ENCODE measurements at regions of chr11 and their contacts with region 1.

Region 1: DNA sequence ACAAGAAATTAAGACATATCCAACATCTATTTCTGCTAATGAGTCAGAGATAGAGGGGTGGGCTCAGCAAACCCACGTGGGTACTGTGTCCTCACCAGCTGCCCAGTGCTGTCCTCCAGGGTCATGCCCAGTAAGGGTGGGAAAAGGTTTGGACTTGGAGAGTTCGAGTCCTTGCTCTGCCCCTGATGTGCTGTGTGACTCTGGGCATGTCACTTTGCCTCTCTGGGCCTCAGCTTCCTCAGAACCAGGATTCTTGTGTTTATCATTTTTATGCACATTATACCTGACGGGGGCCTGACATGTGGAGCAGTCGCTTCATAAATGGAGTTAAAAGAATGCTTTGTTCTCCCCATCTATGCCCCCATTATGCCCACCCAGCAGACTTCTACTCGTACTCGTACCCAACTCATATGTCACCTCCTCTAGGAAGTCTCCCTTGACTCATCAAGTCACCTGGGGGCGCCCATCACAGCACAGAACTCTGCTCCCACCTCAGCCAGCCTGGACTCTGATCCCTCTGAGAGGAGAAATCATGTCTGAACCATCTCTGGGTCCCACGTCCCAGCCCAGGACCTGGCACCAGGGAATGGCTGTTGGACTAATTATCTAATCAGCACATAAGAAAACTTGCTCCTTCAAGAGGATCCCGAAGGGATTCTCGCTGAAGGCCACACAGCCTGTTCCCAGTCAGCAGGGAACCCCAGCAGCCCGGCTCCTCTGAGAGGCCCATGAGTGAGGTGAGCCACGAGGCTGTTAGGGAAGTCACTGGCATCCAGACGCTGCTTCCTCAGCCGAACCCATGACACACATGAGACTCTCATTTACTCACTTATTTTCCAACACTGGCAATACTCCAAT is 38.7 kb upstream of the TSKU start:
- DNase-seq: peak; percentile 83
- H3K4me3 ChIP-seq: no peak overlapping the region
- H3K27ac ChIP-seq: no peak overlapping the region
- H3K4me1 ChIP-seq: peaks cover 11% of the 10 kb centered on the region; the same call in 1 of the 2 replicates
- H3K27me3 ChIP-seq: no peaks in the 10 kb centered on the region

Region 2: DNA sequence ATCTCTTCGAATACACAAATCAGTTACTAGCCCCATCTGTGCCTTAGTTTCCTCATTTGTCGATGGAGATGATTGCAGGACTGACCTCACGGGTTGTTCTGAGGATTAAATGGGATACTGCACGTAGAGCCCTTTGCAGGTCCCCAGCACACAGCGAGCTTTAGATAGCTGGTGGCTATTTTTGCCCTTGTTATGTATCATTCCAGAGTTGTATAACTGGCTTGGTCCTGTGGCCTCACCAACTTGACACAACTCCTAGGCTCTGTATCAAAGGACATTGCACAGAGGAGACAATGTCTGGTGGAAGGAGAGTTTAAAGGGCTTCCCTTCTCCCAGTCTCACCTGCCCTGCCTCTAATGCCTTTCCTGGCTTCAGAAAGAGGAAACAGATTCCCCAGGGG is 998.6 kb before region 1 on chr11:
- in situ Hi-C with region 1: no loop called
- DNase-seq: no peak
- H3K4me3 ChIP-seq: no peak overlapping the region
- H3K27ac ChIP-seq: no peak overlapping the region
- H3K4me1 ChIP-seq: no peaks in the 10 kb centered on the region
- H3K27me3 ChIP-seq: peaks cover 29% of the 10 kb centered on the region

Region 3: DNA sequence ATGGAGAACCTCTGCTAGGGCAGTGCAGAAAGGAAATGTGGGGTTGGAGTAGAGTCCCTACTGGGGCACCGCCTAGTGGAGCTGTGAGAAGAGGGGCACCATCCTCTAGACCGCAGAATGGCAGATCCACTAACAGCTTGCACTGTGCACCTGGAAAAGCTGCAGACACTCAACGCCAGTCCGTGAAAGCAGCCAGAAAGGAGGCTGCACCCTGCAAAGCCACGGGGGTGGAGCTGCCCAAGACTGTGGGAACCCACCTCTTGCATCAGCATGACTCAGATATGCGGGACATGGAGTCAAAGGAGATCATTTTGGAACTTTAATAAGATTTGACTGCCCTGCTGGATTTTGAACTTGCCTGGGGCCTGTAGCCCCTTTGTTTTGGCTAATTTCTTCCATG is 47.4 kb after region 1 on chr11:
- in situ Hi-C with region 1: loop called (anchors 5 kb)
- DNase-seq: peak; percentile 88
- H3K4me3 ChIP-seq: no peak overlapping the region
- H3K27ac ChIP-seq: peak overlapping the region; percentile 63
- H3K4me1 ChIP-seq: peaks cover 29% of the 10 kb centered on the region
- H3K27me3 ChIP-seq: no peaks in the 10 kb centered on the region